ENCODE measurements at regions of chr1 and their contacts with region 1.

Region 1: DNA sequence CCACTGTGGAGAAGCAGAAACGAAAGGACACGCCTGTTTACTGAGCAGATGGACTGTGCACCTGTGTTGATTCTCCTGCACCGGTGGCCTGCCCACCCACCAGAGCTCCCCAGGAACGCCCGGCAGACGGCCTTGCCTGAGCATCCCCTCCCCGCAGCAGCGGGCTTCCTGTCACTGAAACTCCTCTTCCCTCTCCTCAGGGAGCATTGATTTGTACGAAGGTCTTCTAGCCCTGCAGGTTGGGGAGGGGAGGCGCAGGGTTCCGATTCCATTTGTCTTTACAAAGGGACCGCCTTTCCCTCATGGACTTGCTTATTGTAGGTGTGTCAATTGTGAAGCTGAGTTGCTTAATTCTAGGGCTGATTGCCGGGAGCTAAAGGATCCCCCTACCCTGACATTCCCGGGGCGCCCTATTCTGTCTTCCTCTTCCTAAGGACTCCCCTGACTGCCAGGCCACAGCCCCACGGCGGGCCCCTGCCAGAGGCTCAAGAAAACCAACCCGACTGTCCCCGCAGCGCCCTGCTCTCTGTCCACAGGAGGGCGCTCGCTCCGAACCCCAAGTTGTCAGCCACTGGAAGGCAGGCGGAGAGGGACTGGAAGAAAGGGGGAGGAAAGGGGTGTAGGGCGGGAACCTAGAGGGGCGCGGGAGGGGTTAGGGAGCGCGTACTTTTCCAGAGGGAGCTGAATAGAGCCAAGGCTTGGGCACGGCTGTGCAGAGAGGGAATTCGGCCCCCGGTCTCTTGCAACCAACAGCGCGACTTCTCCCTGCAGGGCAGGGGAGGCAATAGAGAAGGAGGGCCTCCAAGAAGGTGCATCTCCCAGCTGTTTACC is 2.8 kb downstream of the S100A6 start:
- DNase-seq: peak; percentile 36
- H3K4me3 ChIP-seq: peak overlapping the region; percentile 63
- H3K27me3 ChIP-seq: no peaks in the 10 kb centered on the region
- CTCF ChIP-seq: peak; percentile 97

Region 2: DNA sequence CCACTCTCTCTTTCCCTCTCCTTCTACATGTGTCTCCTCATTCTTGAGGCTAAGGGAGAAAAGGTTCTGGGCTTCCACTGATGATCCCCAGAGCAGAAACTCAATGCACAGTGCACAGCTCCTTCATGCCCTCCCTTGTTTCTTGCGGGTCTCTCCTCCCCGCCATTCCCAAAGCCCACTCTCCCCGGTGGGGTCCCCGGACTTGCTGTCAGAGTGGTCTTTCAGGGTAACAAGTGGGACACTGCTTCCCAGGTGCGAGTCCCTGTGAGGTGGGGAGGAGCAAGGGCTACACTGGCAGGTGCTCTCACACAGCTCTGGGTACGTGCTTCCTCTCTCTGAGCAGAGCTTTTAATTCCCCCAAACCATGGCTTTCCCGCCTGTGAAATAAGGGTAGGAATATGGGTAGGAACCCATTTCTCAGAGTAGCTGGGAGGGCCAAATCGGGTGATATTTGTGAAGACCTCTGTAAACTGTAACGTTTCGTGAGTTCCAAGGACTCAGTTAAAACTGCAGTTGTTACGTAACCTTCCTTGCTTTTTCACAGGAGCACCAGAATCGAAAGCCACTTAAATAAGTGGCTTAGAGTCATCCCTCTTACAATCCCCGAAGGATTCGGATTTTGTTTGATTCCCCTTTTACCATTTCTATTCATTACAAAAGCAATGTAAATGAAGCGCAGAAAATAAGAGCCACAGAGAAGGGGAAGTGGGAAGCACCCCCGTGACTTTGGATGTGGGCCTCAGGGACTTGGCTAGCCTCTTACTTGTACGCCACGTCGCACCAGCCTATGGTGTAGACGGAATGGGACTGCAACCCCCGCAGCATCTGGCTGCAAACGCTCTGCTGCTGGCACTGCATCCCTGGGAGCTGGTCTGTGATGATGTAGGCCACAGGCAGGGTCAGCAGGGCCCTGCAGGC is 226.4 kb before region 1 on chr1:
- CTCF ChIA-PET with region 1: no interaction called
- POLR2A ChIA-PET with region 1: no interaction called
- DNase-seq: no peak
- H3K4me3 ChIP-seq: no peak overlapping the region
- H3K27me3 ChIP-seq: no peaks in the 10 kb centered on the region
- CTCF ChIP-seq: no peak

Region 3: GRCh38 chr1:153470707-153471106 is 62.3 kb before region 1 on chr1:
- CTCF ChIA-PET with region 1: no interaction called
- POLR2A ChIA-PET with region 1: no interaction called
- DNase-seq: no peak
- H3K4me3 ChIP-seq: no peak overlapping the region
- H3K27me3 ChIP-seq: no peaks in the 10 kb centered on the region
- CTCF ChIP-seq: no peak

Region 4: DNA sequence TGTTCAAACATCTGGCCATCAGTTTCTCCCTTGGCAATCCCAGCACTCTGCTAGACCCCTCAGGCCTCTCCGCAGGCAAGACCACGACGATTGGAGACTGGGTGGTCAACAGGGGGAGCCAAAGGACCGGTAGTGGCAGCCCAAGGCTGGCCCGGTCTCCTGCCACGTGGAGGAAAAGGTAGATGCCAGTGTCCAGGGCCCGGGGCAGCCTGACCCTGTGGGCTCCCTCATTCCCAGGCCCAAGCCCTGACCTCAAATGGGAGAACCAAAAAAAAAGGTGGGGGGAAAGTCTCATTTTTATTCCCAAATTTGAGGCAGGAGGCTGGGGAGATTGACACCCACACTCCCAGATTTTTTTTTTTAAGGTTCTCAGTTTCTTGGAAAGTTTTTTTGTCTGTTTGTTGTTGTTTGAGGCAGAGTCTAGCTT is 22.0 kb before region 1 on chr1:
- CTCF ChIA-PET with region 1: interaction called, 15 read pairs
- POLR2A ChIA-PET with region 1: no interaction called
- DNase-seq: no peak
- H3K4me3 ChIP-seq: no peak overlapping the region
- H3K27me3 ChIP-seq: no peaks in the 10 kb centered on the region
- CTCF ChIP-seq: peak; percentile 97

Region 5: GRCh38 chr1:153545067-153546055 is 12.4 kb after region 1 on chr1 and contains the start of gene S100A4:
- CTCF ChIA-PET with region 1: interaction called, 39 read pairs
- POLR2A ChIA-PET with region 1: interaction called, 36 read pairs
- DNase-seq: peak; percentile 86
- H3K4me3 ChIP-seq: peak within 1 kb of the TSS; percentile 44
- H3K27me3 ChIP-seq: no peaks in the 10 kb centered on the region
- CTCF ChIP-seq: 0 out of 2 replicates have a peak, but pooled peaks have one; percentile 3
- polyA plus RNA-seq, gene S100A4: 529 and 797 TPM in 2 replicates

Region 6: GRCh38 chr1:153566440-153567379 is 33.7 kb after region 1 on chr1:
- CTCF ChIA-PET with region 1: interaction called, 164 read pairs
- POLR2A ChIA-PET with region 1: interaction called, 16 read pairs
- DNase-seq: peak; percentile 89
- H3K4me3 ChIP-seq: no peak overlapping the region
- H3K27me3 ChIP-seq: no peaks in the 10 kb centered on the region
- CTCF ChIP-seq: no peak

Region 7: DNA sequence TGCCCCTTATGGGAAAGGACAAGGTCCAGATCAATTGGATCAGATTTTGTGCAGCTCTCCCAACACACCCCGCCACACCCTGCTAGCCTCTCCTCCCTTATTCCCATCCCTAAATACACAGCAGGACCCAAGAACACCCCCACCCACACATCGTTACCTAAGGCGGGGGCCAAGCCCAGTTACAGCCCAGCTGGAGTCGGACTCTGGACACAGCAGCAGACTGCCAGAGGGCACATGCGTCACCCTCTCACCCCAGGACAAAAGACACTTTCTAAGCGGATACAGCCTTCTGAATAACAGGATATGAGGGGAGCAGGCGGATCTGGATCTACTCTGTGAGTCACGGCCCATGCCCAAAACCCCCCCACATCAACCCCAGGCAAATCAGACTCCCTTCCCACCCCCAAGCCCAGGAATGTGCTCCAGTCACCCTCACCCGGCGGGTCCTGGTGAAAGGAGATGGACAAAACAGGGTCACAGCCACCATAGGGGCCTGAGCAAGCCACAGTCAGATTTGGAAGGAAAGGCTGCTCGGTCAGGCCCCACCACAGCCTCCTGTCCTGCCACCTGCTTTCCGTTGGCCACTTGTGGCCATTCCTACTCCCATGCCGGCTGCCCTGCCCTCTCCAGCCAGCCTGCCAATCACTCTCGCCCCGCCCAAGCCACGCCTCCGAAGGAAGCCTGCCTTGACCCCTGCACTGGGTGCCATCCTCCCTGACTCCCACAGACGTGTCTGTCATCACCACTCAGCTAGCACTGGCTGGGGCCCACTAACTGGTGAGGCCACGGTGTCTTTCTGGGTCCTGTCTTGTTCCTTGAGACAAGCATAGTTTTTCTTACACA is 76.0 kb after region 1 on chr1:
- CTCF ChIA-PET with region 1: interaction called, 18 read pairs
- POLR2A ChIA-PET with region 1: no interaction called
- DNase-seq: peak; percentile 84
- H3K4me3 ChIP-seq: peak overlapping the region; percentile 35
- H3K27me3 ChIP-seq: no peaks in the 10 kb centered on the region
- CTCF ChIP-seq: no peak

Region 8: DNA sequence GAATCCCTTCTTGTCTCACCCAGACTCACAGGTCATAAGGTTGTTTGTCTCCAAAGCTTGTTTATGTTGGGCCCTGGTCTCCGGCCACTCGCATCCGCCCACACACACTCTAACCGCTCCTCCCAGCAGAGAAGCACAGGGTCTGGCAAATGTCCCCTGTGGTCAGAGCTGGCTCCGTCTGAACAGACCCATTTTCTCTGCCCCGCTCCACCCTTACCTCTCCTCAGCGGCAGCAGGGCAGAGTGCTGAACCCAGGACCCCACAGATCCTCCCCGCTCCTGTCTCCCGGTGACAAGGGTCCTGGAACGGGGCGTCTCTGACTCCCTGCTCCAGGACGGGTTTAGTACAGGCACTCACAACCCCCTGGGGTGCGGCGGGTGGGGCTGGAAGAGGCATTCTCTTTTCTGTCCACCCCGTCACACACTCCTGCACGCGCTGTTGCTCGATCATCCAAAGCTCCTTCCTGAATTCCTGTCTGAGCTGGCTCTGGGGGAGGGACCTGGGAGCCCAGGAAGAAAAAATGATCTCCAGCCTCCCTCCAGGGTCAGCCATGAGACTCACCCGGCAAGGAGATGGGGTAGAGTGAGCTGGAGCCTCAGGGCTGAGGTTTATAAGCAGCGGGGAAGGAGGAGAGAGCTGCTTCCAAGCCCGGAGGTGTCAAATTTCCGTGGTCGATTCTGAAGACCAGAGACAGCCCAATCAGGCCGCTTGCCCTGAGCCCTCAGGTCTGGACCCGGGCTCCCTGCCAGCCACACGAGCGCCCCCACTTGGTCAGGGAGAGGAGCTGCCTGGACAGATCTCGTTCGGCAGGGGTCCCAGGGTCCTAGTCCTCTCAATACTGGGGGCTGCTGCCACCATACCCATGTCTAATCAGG is 94.2 kb after region 1 on chr1 and contains the start of gene S100A13:
- CTCF ChIA-PET with region 1: interaction called, 18 read pairs
- POLR2A ChIA-PET with region 1: interaction called, 3 read pairs
- DNase-seq: peak; percentile 69
- H3K4me3 ChIP-seq: peak within 1 kb of the TSS; percentile 57
- H3K27me3 ChIP-seq: no peaks in the 10 kb centered on the region
- CTCF ChIP-seq: peak; percentile 79
- polyA plus RNA-seq, gene S100A13: 310 and 313 TPM in 2 replicates